Naive thymus-derived CD4-positive, alpha-beta T cell (primary cell): ENCODE measurements at regions of chr19 and their contacts with region 1.

Region 1: DNA sequence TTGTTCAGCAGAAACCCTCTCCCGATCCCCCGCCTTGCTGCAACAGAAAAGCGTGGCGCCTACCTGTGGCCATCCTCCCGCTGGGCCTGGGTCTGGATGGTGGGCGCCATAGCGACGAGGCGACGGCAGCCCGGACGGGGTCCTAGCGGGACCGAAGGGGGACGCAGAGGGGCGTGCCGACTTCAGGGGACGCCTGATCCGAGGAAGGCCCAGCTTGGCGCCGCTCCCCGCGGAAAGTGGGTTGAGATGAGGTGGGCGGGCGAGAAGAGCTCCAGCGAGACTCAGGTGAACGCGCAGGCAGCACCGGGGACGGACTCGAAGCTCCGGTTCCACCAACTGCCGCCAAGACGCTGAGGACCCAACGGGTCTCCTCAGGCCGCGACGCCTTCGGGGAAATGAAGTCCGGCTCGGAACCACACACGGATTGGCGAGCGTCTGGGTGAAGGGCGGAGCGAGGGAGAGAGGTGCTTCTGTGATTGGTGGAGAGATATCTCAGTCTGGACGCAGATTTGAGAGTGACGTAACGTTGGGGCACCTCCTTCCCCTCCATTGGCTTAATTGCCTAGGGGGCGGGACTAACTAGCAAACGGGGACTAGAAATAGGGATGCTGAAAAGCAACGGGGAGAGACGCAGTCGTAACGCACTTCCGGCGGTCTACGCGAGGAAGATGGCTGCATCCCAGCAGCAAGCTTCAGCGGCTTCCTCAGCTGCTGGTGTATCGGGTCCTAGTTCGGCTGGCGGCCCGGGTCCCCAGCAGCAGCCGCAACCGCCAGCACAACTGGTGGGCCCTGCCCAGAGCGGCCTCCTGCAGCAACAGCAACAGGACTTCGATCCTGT is at the starts of genes MED29 and PAF1:
- DNase-seq: peak; percentile 76 to 99 (median 99)
- ATAC-seq: peak; percentile 95
- H3K4me3 ChIP-seq: peak within 1 kb of the TSS; percentile 84
- H3K4me3 Mint-ChIP-seq: peak within 1 kb of the TSS; percentile 89 to 99 (median 96)
- H3K27ac ChIP-seq: peak within 1 kb of the TSS; percentile 95
- H3K27ac Mint-ChIP-seq: peak within 1 kb of the TSS; percentile 95 to 100 (median 99)
- H3K4me1 ChIP-seq: peaks cover 16% of the 10 kb centered on the region in 2 donors
- H3K4me1 Mint-ChIP-seq: peaks cover 21 to 54% (median 38%) of the 10 kb centered on the region in 7 donors
- H3K27me3 ChIP-seq: no peaks in the 10 kb centered on the region
- H3K27me3 Mint-ChIP-seq: no peaks in the 10 kb centered on the region
- total RNA-seq, gene MED29: 44.2 to 57.2 (median 49.4) TPM
- total RNA-seq, gene PAF1: 42.8 to 104 (median 55.5) TPM

Region 2: GRCh38 chr19:39078436-39079200 is 312.4 kb before region 1 on chr19:
- CTCF ChIA-PET with region 1: no interaction called
- POLR2A ChIA-PET with region 1: no interaction called
- intact Hi-C with region 1: loop called in 1 of 2 experiments (anchors 1 kb)
- DNase-seq: no peak
- ATAC-seq: no peak
- H3K4me3 ChIP-seq: no peak overlapping the region
- H3K4me3 Mint-ChIP-seq: no peak overlapping the region
- H3K27ac ChIP-seq: no peak overlapping the region
- H3K27ac Mint-ChIP-seq: no peak overlapping the region
- H3K4me1 ChIP-seq: peaks cover 15 to 17% of the 10 kb centered on the region in 2 donors
- H3K4me1 Mint-ChIP-seq: peaks cover 12 to 30% (median 20%) of the 10 kb centered on the region in 7 donors
- H3K27me3 ChIP-seq: peaks cover 12 to 13% of the 10 kb centered on the region in 2 donors
- H3K27me3 Mint-ChIP-seq: peaks cover 17 to 33% (median 25%) of the 10 kb centered on the region in 5 donors

Region 3: DNA sequence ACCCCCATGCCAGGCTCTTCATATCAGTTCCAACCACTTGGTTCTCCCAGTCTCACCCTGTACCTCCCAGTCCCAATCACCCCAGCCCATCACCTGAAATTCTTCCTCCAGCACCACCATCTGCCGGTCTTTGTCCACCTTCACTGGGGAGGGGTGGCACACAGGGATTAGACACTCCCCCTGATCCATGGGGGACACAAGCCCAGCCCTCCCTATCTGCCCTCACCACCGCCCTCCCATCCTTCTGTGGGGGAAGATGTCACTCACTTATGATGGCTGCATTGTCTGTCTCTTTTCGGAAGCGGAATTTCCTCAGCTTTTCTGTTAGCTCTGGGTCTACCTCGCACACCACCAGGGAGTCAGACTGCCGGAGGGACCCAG is 55.8 kb before region 1 on chr19:
- CTCF ChIA-PET with region 1: no interaction called
- POLR2A ChIA-PET with region 1: interaction called, 22 read pairs
- intact Hi-C with region 1: no loop called
- DNase-seq: peak in 5 of 9 donors; percentile 24 to 50 (median 40)
- ATAC-seq: peak; percentile 44
- H3K4me3 ChIP-seq: peak overlapping the region; percentile 97
- H3K4me3 Mint-ChIP-seq: peak overlapping the region; percentile 98 to 100 (median 100)
- H3K27ac ChIP-seq: peak overlapping the region; percentile 94
- H3K27ac Mint-ChIP-seq: peak overlapping the region; percentile 94 to 100 (median 99)
- H3K4me1 ChIP-seq: peaks cover 29 to 58% of the 10 kb centered on the region in 2 donors
- H3K4me1 Mint-ChIP-seq: peaks cover 49 to 80% (median 56%) of the 10 kb centered on the region in 7 donors
- H3K27me3 ChIP-seq: no peaks in the 10 kb centered on the region
- H3K27me3 Mint-ChIP-seq: no peaks in the 10 kb centered on the region

Region 4: DNA sequence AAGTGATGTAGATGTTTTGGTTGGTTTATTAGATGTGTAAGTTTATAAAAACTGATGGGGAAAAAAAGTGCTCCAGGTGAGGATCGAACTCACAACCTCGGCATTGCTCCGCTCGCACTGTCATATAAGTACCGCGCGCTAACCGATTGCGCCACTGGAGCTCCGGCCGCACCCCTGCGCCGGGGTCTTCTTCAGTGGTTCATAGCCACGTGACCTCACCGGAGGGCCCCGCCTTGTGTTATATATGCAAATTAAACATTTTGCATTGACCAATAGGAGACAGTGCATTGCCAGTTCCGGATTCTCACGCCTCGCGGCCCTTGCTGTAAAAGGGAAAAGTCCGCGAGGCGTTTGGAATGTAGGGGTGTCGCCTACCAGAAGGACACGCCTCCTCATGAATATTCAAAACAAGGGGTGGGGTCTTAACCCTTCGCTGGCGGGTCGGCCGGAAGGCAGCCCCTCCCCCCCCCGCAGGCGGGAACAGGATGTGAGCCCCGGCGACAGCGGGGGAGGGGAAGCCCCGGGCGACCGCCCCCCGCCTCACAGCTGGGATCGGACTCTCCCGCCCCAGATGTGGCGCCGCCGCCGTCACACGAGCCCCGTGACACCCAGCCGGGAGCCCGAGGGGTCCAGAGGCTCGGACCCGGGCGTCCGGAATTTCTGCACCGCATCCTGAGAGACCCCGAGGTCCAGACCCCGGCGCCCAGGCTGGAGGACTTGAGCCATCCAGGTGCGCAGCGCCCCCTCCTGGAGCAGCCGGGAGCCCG is 21.3 kb after region 1 on chr19 and contains the start of gene PLEKHG2:
- CTCF ChIA-PET with region 1: interaction called, 121 read pairs
- POLR2A ChIA-PET with region 1: interaction called, 250 read pairs
- intact Hi-C with region 1: loop called (anchors 1 kb)
- DNase-seq: peak; percentile 95 to 99 (median 99)
- ATAC-seq: peak; percentile 72
- H3K4me3 ChIP-seq: peak within 1 kb of the TSS; percentile 82
- H3K4me3 Mint-ChIP-seq: peak within 1 kb of the TSS; percentile 84 to 99 (median 92)
- H3K27ac ChIP-seq: peak within 1 kb of the TSS; percentile 100
- H3K27ac Mint-ChIP-seq: peak within 1 kb of the TSS; percentile 90 to 100 (median 97)
- H3K4me1 ChIP-seq: peaks cover 24 to 28% of the 10 kb centered on the region in 2 donors
- H3K4me1 Mint-ChIP-seq: peaks cover 24 to 49% (median 35%) of the 10 kb centered on the region in 7 donors
- H3K27me3 ChIP-seq: no peaks in the 10 kb centered on the region
- H3K27me3 Mint-ChIP-seq: peaks cover 0 to 3% (median 0%) of the 10 kb centered on the region in 5 donors
- total RNA-seq, gene PLEKHG2: 16.4 to 205 (median 58.2) TPM

Region 5: DNA sequence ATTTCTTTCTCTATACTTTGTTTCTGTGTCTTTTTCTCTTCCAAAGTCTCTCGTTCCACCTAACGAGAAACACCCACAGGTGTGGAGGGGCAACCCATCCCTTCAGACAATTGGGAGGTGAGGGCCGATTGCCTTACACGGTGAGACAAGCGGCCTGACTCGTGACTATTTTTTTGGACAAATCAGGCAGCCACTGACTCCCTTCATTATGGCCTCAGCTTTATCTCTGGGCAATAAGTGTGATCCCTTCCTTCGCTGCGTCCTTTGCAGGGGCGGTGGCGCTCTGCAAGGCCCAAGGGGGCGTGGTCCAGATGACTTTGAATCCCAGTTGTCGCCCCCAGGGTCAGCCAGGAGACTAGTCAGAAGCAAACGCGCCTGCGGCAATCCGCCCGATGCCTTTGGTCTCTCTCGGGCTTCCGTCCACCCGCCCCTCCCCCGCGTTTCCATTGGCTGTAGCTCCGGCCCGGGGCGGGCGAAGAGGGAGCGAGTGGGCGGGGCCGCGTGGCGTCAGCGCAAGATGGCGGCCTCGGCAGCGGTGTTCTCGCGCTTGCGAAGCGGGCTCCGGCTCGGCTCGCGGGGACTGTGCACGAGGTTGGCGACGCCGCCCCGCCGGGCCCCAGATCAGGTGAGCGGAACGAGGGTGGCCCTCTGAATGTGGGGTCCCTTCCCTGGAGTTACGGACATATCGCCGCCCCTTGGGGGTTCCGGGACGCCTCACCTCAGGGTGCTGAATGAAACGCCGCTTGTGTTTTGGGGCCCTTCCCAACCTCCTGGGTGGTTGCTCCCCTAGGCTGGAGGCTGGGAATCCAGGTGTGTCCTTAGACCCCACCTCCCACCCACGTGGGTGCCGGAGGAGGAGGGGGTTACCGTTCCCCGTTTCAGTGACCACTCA is 89.6 kb after region 1 on chr19 and contains the start of gene TIMM50:
- CTCF ChIA-PET with region 1: no interaction called
- POLR2A ChIA-PET with region 1: interaction called, 5 read pairs
- intact Hi-C with region 1: loop called in 1 of 2 experiments (anchors 1 kb)
- DNase-seq: peak; percentile 93 to 98 (median 95)
- ATAC-seq: peak; percentile 100
- H3K4me3 ChIP-seq: peak within 1 kb of the TSS; percentile 74
- H3K4me3 Mint-ChIP-seq: peak within 1 kb of the TSS; percentile 86 to 97 (median 92)
- H3K27ac ChIP-seq: peak within 1 kb of the TSS; percentile 86
- H3K27ac Mint-ChIP-seq: peak within 1 kb of the TSS; percentile 80 to 97 (median 93)
- H3K4me1 ChIP-seq: peaks cover 10 to 11% of the 10 kb centered on the region in 2 donors
- H3K4me1 Mint-ChIP-seq: peaks cover 14 to 32% (median 25%) of the 10 kb centered on the region in 7 donors
- H3K27me3 ChIP-seq: no peaks in the 10 kb centered on the region
- H3K27me3 Mint-ChIP-seq: no peaks in the 10 kb centered on the region
- total RNA-seq, gene TIMM50: 43.5 to 70.0 (median 50.0) TPM